Dendritic cell treated with granulocyte-macrophage colony-stimulating factor and Interleukin-4, amounts not matched to agents 40 ng/mL and 50 ng/mL, for 4 days (primary cell): ENCODE measurements at regions of chr19 and their contacts with region 1.

Region 1: GRCh38 chr19:36665832-36666231 is 805 bp downstream of the ZNF461 start:
- H3K4me3 Mint-ChIP-seq: peak overlapping the region; percentile 98
- H3K27ac Mint-ChIP-seq: peak overlapping the region; percentile 97
- H3K4me1 Mint-ChIP-seq: peaks cover 22% of the 10 kb centered on the region
- H3K27me3 Mint-ChIP-seq: no peaks in the 10 kb centered on the region

Region 2: GRCh38 chr19:36652958-36653357 is 12.9 kb before region 1 on chr19:
- intact Hi-C with region 1: no loop called
- H3K4me3 Mint-ChIP-seq: no peak overlapping the region
- H3K27ac Mint-ChIP-seq: no peak overlapping the region
- H3K4me1 Mint-ChIP-seq: no peaks in the 10 kb centered on the region
- H3K27me3 Mint-ChIP-seq: no peaks in the 10 kb centered on the region

Region 3: DNA sequence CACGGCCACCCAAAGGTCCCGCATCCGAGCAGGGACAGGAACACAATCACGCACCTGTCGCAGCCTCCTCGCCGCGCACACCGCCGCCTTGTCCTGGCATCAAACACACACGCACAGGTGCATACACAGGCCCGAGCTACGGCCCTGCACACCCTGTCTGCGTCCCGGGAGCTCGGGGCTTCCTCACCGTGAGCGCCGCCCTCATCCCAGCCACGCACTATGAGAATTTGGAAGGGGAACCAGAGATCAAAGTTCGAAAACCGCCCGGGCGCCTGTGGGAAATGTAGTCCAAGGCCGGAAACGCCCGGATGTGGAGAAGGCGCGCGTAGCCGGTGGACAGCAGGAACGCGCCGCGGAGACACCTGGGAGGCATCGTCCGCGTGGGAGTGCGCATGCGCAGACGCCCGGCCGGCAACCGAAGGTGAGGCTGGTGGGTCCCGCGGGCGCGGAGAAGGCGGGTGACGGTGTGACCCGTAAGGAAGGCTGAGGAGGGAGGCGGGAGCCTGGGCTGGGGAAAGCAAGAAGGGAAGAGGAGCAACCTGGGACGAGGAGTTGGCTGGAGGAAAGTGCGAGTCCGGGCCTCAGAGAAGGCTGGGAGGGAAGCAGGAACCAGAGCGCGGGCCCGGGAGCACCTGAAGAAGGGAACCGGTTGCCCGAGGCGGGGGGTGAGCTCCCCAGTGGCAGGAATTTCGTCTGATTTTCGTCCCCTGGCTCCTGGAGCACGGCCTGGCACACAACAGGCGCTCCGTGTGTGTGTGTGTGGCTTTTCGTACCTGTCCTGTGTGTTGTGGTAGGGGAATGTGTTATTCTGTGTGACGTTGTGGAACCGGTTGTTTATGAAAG is 21.6 kb after region 1 on chr19 and contains the start of gene ZNF567:
- intact Hi-C with region 1: loop called (anchors 1 kb)
- H3K4me3 Mint-ChIP-seq: peak within 1 kb of the TSS; percentile 99
- H3K27ac Mint-ChIP-seq: peak within 1 kb of the TSS; percentile 94
- H3K4me1 Mint-ChIP-seq: peaks cover 29% of the 10 kb centered on the region
- H3K27me3 Mint-ChIP-seq: no peaks in the 10 kb centered on the region